Calu3 (cell line): ENCODE measurements at regions of chr1 and their contacts with region 1.

Region 1: DNA sequence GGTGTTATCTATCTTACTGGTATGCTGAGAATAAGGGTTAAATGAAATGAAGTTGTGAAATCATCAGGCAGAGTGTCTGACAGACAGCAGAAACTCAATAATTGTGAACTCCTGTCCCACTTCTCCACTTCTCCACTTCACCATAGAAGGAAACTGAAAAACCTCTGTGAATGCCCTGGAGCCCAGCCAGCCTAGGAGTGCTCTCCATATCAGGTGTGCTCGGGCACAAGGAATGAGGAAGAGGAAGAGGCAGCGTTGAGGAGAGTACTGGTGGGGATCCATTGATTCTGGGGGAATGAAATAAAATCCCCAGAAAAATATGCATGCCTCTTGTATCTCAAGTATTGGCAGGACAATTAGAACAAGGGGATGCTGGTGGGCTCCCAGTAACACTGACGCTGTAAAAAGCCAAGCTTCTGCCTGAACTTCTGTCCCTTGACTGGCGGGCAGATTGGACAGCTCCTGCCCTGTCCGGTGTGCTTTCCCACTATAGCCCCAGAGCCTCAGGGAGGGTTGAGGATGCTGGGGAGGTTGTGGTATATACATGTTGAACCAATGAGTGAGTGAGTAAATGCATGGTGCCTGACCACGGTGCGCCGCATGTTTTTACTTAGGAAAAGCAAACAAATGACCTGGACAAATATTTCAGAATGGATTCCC is 47.7 kb downstream of the NMNAT2 start:
- DNase-seq: peak; percentile 85
- H3K4me3 Mint-ChIP-seq: peak overlapping the region; percentile 45
- H3K27ac Mint-ChIP-seq: peak overlapping the region; percentile 72
- H3K4me1 Mint-ChIP-seq: peaks cover 56% of the 10 kb centered on the region
- H3K27me3 Mint-ChIP-seq: no peaks in the 10 kb centered on the region
- CTCF ChIP-seq: no peak

Region 2: DNA sequence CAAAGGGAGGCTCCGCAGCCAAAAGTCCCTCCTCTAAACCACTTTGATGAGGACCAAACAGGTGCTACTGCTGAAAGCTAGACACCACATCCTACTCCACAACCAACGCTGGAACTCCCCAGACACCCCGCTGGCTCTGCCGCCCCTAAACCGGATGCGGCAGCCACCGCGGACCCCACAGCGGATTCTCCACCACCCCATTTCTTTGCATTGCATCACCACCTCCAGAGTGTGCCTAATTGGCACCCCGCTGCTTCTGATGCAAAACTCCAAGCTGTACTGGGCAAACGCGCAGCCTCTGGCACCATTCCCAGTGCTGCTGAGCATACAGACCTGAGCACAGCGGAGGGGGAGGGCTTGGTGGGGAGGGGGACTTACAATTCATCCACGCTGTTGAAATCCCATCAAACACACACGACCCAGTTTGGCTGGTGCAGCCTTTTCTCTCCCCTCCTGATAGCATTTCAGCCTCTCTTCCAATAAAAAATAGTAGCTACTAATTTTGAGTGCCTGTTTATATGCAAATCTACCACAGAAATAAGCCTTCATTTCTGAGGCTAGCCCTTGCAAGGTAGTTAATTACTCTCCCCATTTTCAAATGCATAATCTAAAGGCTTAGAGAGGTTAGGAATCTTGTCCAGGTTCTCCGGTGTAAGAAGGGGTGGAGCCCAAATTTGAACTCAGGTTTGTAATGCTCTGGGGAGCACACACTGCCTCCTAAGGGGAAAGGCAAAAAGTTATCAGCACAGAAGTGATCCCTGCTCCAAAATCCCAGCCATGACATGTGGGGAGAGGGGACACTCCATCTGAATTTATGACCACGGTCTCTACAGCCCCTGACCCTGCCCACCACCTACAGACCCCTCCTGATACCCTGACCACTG is 754.2 kb before region 1 on chr1:
- CTCF ChIA-PET with region 1: no interaction called
- intact Hi-C with region 1: no loop called
- DNase-seq: peak; percentile 49
- H3K4me3 Mint-ChIP-seq: peak overlapping the region; percentile 79
- H3K27ac Mint-ChIP-seq: peak overlapping the region; percentile 40
- H3K4me1 Mint-ChIP-seq: peaks cover 34% of the 10 kb centered on the region
- H3K27me3 Mint-ChIP-seq: peaks cover 26% of the 10 kb centered on the region
- CTCF ChIP-seq: no peak

Region 3: DNA sequence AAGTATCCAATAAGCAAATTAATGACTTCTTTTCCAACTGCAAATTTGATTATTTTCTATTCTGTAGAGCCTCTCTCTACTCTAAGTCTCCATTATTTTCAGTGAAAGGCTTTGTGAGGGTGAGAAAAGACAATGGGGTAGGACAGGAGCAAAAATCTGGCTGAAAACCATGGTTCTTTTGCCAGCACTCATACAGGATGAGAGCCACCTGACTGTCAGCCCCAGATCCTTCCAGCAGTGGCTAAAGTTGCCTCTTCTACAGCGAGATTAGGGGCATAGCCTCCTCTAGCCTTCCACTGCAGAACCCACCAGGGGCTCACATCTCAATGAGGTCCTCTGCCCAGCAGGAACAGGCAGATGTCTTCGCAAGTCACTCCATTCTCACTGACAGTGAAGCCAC is 23.9 kb after region 1 on chr1:
- CTCF ChIA-PET with region 1: no interaction called
- intact Hi-C with region 1: loop called (anchors 2 kb)
- DNase-seq: no peak
- H3K4me3 Mint-ChIP-seq: no peak overlapping the region
- H3K27ac Mint-ChIP-seq: no peak overlapping the region
- H3K4me1 Mint-ChIP-seq: peaks cover 12% of the 10 kb centered on the region
- H3K27me3 Mint-ChIP-seq: peaks cover 52% of the 10 kb centered on the region
- CTCF ChIP-seq: no peak

Region 4: DNA sequence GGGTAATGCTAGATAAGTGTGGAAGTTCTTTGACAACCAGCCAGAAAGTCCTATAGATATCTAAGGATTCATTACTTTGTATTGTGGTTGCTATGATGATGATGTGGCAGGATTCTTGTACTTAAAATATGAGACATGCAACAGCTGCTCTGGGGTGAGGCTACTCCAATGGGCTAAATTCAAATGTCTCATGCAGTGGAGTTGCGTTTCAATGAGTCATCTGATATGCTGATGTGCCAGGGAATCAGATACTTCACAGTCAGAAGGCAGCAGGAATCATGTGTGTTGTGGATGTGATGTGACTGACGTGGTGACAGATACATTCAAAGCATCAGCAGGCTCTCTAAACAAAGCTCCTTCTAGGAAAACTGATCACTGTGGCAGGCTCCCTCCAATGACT is 747.5 kb after region 1 on chr1:
- CTCF ChIA-PET with region 1: no interaction called
- intact Hi-C with region 1: no loop called
- DNase-seq: no peak
- H3K4me3 Mint-ChIP-seq: no peak overlapping the region
- H3K27ac Mint-ChIP-seq: no peak overlapping the region
- H3K4me1 Mint-ChIP-seq: no peaks in the 10 kb centered on the region
- H3K27me3 Mint-ChIP-seq: no peaks in the 10 kb centered on the region
- CTCF ChIP-seq: no peak